H1 (cell line): ENCODE measurements at regions of chr1 and their contacts with region 1.

Region 1: DNA sequence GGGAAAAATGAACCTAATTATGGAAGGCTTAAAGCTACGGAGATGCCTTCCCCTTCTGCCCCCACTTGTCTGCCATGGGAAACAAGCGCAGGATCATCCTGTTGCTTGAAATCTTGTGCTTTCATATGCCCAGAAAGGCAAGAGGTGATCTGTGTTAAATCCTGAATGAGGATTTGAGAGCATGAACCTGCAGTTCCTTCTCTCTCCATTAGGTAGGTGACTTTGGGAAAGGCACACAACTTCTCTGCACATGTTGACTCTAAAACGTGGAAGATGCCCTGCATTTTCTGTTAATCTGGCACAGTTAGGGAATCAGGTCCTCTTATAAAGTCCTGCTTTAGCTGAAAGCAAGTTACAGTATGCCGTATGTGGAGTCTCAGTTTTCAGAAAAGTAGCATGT is 46.6 kb upstream of the MTR start:
- DNase-seq: no peak
- H3K4me3 ChIP-seq: no peak overlapping the region
- H3K27ac ChIP-seq: no peak overlapping the region
- H3K4me1 ChIP-seq: no peaks in the 10 kb centered on the region
- H3K27me3 ChIP-seq: no peaks in the 10 kb centered on the region
- CTCF ChIP-seq: peak in 1 of 3 experiments; percentile 49; a peak in 1 of 4 replicates
- EP300 ChIP-seq: no peak
- POLR2A ChIP-seq: no peak
- RAD21 ChIP-seq: no peak

Region 2: DNA sequence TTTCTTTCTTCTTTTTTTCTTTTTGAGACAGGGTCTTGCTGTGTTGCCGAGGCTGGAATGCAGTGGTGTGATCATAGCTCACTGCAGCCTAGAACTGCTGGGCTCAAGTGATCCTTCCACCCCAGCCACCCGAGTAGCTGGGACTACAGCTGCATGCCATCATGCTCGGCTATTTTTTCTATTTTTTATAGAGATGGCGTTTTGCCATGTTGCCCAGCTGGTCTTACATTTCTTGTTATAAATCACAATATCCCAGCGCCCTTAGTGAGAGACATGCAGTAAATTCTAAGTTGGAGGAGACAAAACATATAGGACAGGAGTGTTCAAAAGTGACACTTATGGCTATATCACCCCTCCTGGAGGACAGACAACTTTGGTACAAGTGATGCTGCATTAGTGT is 93.5 kb before region 1 on chr1:
- CTCF ChIA-PET with region 1: no interaction called
- POLR2A ChIA-PET with region 1: no interaction called
- DNase-seq: no peak
- H3K4me3 ChIP-seq: no peak overlapping the region
- H3K27ac ChIP-seq: no peak overlapping the region
- H3K4me1 ChIP-seq: peaks cover 1 to 2% (median 2%) of the 10 kb centered on the region in 4 experiments; a peak in 4 of 7 replicates
- H3K27me3 ChIP-seq: no peaks in the 10 kb centered on the region
- CTCF ChIP-seq: no peak
- EP300 ChIP-seq: no peak
- POLR2A ChIP-seq: no peak
- RAD21 ChIP-seq: no peak

Region 3: DNA sequence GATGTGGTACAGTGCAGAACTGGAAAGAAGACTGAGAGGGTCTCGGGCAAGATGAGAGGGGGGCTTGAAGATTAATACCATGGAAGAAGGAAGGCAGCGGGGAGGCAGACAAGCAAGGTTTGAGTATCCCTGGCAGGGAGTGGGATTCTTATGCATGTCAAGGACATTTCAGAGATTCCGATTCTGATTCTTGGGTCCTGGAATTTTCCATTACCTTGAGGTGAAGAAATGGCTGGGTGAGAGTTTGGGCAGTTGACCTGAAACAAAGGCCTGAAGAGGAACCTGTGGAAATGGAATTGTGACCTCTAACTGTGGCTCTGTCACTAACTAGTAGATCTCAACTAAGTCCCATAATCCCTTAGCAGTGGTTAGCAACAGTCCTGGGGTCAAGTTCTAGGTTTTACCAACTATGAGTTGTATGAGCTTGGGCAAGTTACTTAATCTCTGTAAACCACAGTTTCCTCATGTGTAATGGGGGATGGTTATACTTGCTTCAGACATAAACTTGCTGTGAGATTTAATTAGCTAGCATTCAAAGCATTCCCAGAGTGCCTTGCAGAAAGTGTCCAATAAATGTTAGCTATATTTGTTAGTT is 70.7 kb before region 1 on chr1:
- CTCF ChIA-PET with region 1: no interaction called
- POLR2A ChIA-PET with region 1: no interaction called
- DNase-seq: no peak
- H3K4me3 ChIP-seq: no peak overlapping the region
- H3K27ac ChIP-seq: no peak overlapping the region
- H3K4me1 ChIP-seq: peaks cover 0 to 5% (median 1%) of the 10 kb centered on the region in 4 experiments; a peak in 2 of 7 replicates
- H3K27me3 ChIP-seq: no peaks in the 10 kb centered on the region
- CTCF ChIP-seq: no peak
- EP300 ChIP-seq: no peak
- POLR2A ChIP-seq: no peak
- RAD21 ChIP-seq: no peak

Region 4: GRCh38 chr1:236724049-236724448 is 24.4 kb before region 1 on chr1:
- CTCF ChIA-PET with region 1: no interaction called
- POLR2A ChIA-PET with region 1: no interaction called
- DNase-seq: no peak
- H3K4me3 ChIP-seq: no peak overlapping the region
- H3K27ac ChIP-seq: no peak overlapping the region
- H3K4me1 ChIP-seq: no peaks in the 10 kb centered on the region
- H3K27me3 ChIP-seq: no peaks in the 10 kb centered on the region
- CTCF ChIP-seq: no peak
- EP300 ChIP-seq: no peak
- POLR2A ChIP-seq: no peak
- RAD21 ChIP-seq: no peak

Region 5: GRCh38 chr1:236734141-236734765 is 14.2 kb before region 1 on chr1:
- CTCF ChIA-PET with region 1: interaction called, 15 read pairs
- POLR2A ChIA-PET with region 1: no interaction called
- DNase-seq: no peak
- H3K4me3 ChIP-seq: no peak overlapping the region
- H3K27ac ChIP-seq: no peak overlapping the region
- H3K4me1 ChIP-seq: no peaks in the 10 kb centered on the region; a peak in 1 of 7 replicates
- H3K27me3 ChIP-seq: no peaks in the 10 kb centered on the region
- CTCF ChIP-seq: no peak
- EP300 ChIP-seq: no peak
- POLR2A ChIP-seq: no peak
- RAD21 ChIP-seq: no peak

Region 6: DNA sequence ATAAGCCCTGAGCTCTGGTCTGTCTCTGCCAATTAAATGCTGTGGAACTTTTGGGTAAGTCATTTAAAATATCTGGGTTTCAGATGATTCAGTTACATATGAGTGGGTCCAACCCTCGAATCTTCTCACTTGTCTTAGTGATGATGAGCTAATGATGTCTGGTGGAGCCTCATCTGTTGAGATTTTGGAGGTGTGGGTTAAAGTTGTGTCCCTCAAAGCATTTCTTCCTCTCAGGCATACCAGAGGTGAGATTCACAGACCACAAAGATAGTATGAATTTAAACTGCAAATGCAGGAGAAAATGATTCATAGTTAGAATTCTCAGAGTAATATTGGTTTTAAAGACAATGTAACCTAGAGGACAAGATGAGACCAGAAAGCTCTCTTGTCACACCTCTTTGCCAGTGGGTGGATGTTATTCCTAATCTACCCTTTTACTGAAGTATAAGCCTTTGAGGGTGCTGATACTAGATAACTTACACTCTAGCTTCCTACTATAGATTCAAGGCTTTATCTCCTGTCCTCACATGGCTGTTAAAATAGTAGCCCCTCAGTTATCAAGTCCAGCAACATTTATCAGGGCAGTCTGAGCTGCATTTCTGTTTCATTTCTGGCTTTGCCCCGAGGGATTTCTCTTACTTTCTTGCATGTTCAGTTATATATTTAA is 165.0 kb after region 1 on chr1:
- CTCF ChIA-PET with region 1: no interaction called
- POLR2A ChIA-PET with region 1: no interaction called
- DNase-seq: no peak
- H3K4me3 ChIP-seq: no peak overlapping the region
- H3K27ac ChIP-seq: no peak overlapping the region
- H3K4me1 ChIP-seq: no peaks in the 10 kb centered on the region
- H3K27me3 ChIP-seq: no peaks in the 10 kb centered on the region
- CTCF ChIP-seq: no peak
- EP300 ChIP-seq: no peak
- POLR2A ChIP-seq: no peak
- RAD21 ChIP-seq: no peak